ENCODE measurements at regions of chr3 and their contacts with region 1.

Region 1: DNA sequence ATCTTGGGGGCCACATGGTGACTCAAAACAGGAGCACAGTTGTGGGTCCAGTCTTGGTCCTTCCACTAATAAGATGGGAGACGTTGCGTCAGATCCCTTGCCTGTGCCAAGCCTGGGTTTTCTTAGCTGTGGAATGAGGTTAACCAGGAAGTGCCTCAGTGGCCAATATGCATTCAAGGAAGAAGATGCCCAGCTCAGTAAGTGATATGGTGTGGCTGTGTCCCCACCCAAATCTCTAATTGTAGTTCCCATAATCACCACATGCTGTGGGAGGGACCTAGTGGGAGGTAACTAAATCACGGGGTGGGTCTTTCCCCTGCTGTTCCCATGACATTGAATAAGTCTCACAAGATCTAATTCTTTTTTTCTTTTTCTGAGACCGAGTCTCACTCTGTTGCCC is 6.4 kb downstream of the ALG1L2 start:
- DNase-seq: no peak
- ATAC-seq: no peak
- H3K4me3 ChIP-seq: no peak overlapping the region
- H3K27ac ChIP-seq: no peak overlapping the region
- H3K4me1 ChIP-seq: no peaks in the 10 kb centered on the region
- H3K27me3 ChIP-seq: no peaks in the 10 kb centered on the region; the same call in 1 of the 2 replicates
- CTCF ChIP-seq: no peak
- POLR2A ChIP-seq: no peak
- RAD21 ChIP-seq: no peak

Region 2: GRCh38 chr3:129768728-129769127 is 319.3 kb before region 1 on chr3:
- CTCF ChIA-PET with region 1: no interaction called
- POLR2A ChIA-PET with region 1: no interaction called
- dilution Hi-C with region 1: no loop called
- in situ Hi-C with region 1: no loop called
- intact Hi-C with region 1: no loop called
- DNase-seq: no peak
- ATAC-seq: no peak
- H3K4me3 ChIP-seq: no peak overlapping the region
- H3K27ac ChIP-seq: no peak overlapping the region
- H3K4me1 ChIP-seq: 0 out of 2 replicates have a peak, but pooled peaks cover 1% of the 10 kb centered on the region
- H3K27me3 ChIP-seq: no peaks in the 10 kb centered on the region
- CTCF ChIP-seq: no peak
- POLR2A ChIP-seq: no peak
- RAD21 ChIP-seq: no peak

Region 3: GRCh38 chr3:129824926-129825541 is 263.0 kb before region 1 on chr3:
- CTCF ChIA-PET with region 1: no interaction called
- POLR2A ChIA-PET with region 1: no interaction called
- dilution Hi-C with region 1: no loop called
- in situ Hi-C with region 1: no loop called
- intact Hi-C with region 1: no loop called
- DNase-seq: peak; percentile 58
- ATAC-seq: no peak
- H3K4me3 ChIP-seq: no peak overlapping the region
- H3K27ac ChIP-seq: no peak overlapping the region
- H3K4me1 ChIP-seq: peaks cover 2% of the 10 kb centered on the region; the same call in 1 of the 2 replicates
- H3K27me3 ChIP-seq: no peaks in the 10 kb centered on the region
- CTCF ChIP-seq: peak; percentile 64
- POLR2A ChIP-seq: no peak
- RAD21 ChIP-seq: peak; percentile 81

Region 4: DNA sequence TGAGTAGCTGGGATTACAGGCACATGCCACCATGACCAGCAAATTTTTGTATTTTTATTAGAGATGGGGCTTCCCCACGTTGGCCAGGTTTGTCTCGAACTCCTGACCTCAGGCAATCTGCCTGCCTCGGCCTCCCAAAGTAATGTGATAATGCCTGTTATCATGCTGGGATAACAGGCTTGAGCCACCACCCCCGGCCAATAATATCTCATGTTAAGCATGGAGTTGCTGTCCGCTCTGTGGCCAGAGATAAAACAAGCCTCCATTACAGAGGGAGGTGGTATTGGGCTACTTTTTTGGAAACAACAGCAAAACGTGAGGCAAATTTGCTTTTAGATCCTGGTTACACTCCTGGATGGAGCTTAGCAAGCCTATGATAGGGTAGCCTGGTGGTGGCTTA is 39.3 kb before region 1 on chr3:
- CTCF ChIA-PET with region 1: no interaction called
- POLR2A ChIA-PET with region 1: no interaction called
- dilution Hi-C with region 1: no loop called
- in situ Hi-C with region 1: no loop called
- intact Hi-C with region 1: loop called (anchors 1 kb)
- DNase-seq: no peak
- ATAC-seq: no peak
- H3K4me3 ChIP-seq: no peak overlapping the region
- H3K27ac ChIP-seq: no peak overlapping the region
- H3K4me1 ChIP-seq: no peaks in the 10 kb centered on the region
- H3K27me3 ChIP-seq: no peaks in the 10 kb centered on the region
- CTCF ChIP-seq: no peak
- POLR2A ChIP-seq: no peak
- RAD21 ChIP-seq: no peak

Region 5: GRCh38 chr3:130609166-130609979 is 521.3 kb after region 1 on chr3:
- CTCF ChIA-PET with region 1: no interaction called
- POLR2A ChIA-PET with region 1: no interaction called
- dilution Hi-C with region 1: no loop called
- in situ Hi-C with region 1: no loop called
- intact Hi-C with region 1: no loop called
- DNase-seq: no peak
- ATAC-seq: no peak
- H3K4me3 ChIP-seq: no peak overlapping the region
- H3K27ac ChIP-seq: no peak overlapping the region
- H3K4me1 ChIP-seq: no peaks in the 10 kb centered on the region
- H3K27me3 ChIP-seq: no peaks in the 10 kb centered on the region
- CTCF ChIP-seq: no peak
- POLR2A ChIP-seq: no peak
- RAD21 ChIP-seq: no peak